ENCODE measurements at regions of chr3 and their contacts with region 1.

Region 1: GRCh38 chr3:113745273-113746068 is 578 bp downstream of the NAA50 start:
- DNase-seq: peak; percentile 89
- H3K4me3 Mint-ChIP-seq: peak overlapping the region; percentile 91
- H3K27ac Mint-ChIP-seq: peak overlapping the region; percentile 100
- H3K4me1 Mint-ChIP-seq: peaks cover 64% of the 10 kb centered on the region
- H3K27me3 Mint-ChIP-seq: no peaks in the 10 kb centered on the region

Region 2: GRCh38 chr3:113019182-113020137 is 726.0 kb before region 1 on chr3:
- CTCF ChIA-PET with region 1: no interaction called
- POLR2A ChIA-PET with region 1: interaction called, 5 read pairs
- intact Hi-C with region 1: loop called (anchors 2 kb)
- DNase-seq: peak; percentile 95
- H3K4me3 Mint-ChIP-seq: peak overlapping the region; percentile 93
- H3K27ac Mint-ChIP-seq: peak overlapping the region; percentile 97
- H3K4me1 Mint-ChIP-seq: peaks cover 55% of the 10 kb centered on the region
- H3K27me3 Mint-ChIP-seq: no peaks in the 10 kb centered on the region

Region 3: DNA sequence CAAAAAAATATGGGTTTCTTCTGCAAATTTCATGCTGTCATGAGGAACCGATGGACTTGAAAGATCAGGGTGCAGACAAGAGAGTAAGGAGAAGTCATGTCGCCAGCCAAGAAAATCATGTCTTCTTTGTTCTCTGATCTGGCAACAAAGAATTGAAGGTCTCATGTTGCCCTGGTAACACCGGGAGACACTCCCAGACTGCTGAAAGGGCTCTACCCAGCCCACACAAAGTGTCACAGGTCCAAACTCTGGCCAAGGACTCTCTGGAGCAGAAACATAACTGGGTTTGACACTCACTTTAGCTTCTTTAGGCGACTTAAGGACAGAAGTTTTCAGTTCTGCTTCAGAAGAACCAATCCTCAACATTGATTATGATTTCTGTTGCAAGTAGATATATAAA is 170.3 kb before region 1 on chr3:
- CTCF ChIA-PET with region 1: interaction called, 9 read pairs
- POLR2A ChIA-PET with region 1: interaction called, 3 read pairs
- intact Hi-C with region 1: loop called (anchors 1 kb)
- DNase-seq: no peak
- H3K4me3 Mint-ChIP-seq: no peak overlapping the region
- H3K27ac Mint-ChIP-seq: no peak overlapping the region
- H3K4me1 Mint-ChIP-seq: peaks cover 5% of the 10 kb centered on the region
- H3K27me3 Mint-ChIP-seq: no peaks in the 10 kb centered on the region

Region 4: GRCh38 chr3:113769551-113769950 is 24.1 kb after region 1 on chr3:
- CTCF ChIA-PET with region 1: interaction called, 4 read pairs
- POLR2A ChIA-PET with region 1: no interaction called
- intact Hi-C with region 1: loop called (anchors 1 kb)
- DNase-seq: no peak
- H3K4me3 Mint-ChIP-seq: no peak overlapping the region
- H3K27ac Mint-ChIP-seq: no peak overlapping the region
- H3K4me1 Mint-ChIP-seq: peaks cover 6% of the 10 kb centered on the region
- H3K27me3 Mint-ChIP-seq: no peaks in the 10 kb centered on the region

Region 5: DNA sequence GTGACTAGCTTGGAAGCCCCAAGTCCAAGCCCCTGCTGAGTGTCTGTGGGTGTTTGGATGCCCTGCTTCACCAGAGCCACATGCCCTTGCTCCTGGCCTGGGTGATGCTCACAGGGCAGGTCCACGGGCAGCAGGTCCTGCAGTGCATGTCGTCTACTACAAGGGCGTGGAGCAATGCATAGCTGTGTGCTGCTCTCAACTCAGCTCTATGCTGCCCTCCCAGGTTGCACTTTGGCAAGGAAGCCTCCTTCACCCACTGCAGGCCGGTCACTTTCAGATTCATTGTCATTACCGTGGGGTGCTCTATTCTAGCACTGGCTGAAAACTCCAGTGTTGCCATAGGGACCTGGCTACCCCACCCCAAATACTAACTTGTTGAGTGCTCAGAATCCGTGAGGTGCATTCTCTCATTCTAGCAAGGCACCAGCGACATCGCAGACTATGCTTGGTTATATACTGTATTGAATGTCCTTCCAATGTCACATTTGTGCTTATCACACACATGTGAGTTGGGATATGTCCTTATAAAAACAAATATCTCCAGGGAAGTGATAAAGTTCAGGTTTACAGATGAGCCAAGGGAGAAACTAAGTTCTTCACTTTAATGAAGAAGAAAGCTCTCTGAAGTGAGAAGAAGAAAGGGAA is 144.9 kb after region 1 on chr3:
- CTCF ChIA-PET with region 1: no interaction called
- POLR2A ChIA-PET with region 1: no interaction called
- intact Hi-C with region 1: no loop called
- DNase-seq: no peak
- H3K4me3 Mint-ChIP-seq: no peak overlapping the region
- H3K27ac Mint-ChIP-seq: no peak overlapping the region
- H3K4me1 Mint-ChIP-seq: no peaks in the 10 kb centered on the region
- H3K27me3 Mint-ChIP-seq: no peaks in the 10 kb centered on the region

Region 6: DNA sequence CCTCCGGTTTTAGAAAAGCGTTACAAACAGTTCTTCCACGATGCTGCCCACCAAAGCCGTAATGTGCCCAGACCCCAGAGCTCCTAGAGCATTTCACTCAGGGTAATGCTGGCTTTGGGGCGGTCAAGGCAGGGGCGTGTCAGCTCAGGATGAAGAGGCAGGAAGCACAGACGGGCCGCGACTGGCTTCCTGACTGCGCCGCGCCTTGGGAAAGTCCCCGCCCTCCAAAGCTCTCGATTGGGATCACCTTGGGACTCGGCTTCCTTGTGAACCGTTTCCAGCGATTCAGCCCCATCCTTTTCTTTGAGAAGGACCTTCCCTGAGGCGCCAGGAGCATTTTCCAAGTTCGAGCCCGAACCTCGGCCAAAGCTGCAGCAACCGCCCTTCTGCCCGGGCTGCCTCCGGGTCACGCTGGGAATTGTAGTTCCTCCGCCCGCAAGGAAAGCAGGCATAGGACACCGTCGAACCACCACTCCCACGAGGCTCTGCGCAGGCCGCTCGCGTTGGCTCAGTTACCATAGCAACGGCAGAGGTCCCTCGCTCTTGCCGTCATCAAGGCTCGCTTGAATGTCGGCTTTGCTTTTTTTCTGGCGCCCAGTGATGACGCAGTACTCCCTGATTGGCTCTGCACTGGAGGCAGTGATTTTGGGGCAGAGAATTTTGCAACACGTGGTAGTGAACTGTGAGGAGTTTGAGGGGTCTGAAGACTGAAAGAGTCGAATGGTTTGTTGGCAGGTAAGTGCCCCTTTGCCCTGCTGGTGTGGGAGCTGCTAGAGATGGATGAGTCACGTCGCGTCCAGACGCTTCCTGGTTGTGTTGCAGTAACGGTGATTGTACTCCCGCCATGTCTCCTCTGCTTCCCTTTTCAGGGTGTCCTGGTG is 310.9 kb after region 1 on chr3 and contains the starts of genes CCDC191 and QTRT2:
- CTCF ChIA-PET with region 1: no interaction called
- POLR2A ChIA-PET with region 1: interaction called, 3 read pairs
- intact Hi-C with region 1: loop called (anchors 1 kb)
- DNase-seq: peak; percentile 99
- H3K4me3 Mint-ChIP-seq: peak within 1 kb of the TSS; percentile 94
- H3K27ac Mint-ChIP-seq: peak within 1 kb of the TSS; percentile 89
- H3K4me1 Mint-ChIP-seq: peaks cover 28% of the 10 kb centered on the region
- H3K27me3 Mint-ChIP-seq: no peaks in the 10 kb centered on the region
- total RNA-seq, gene CCDC191: 3.5 TPM
- total RNA-seq, gene QTRT2: 27.2 to 30.7 TPM

Region 7: DNA sequence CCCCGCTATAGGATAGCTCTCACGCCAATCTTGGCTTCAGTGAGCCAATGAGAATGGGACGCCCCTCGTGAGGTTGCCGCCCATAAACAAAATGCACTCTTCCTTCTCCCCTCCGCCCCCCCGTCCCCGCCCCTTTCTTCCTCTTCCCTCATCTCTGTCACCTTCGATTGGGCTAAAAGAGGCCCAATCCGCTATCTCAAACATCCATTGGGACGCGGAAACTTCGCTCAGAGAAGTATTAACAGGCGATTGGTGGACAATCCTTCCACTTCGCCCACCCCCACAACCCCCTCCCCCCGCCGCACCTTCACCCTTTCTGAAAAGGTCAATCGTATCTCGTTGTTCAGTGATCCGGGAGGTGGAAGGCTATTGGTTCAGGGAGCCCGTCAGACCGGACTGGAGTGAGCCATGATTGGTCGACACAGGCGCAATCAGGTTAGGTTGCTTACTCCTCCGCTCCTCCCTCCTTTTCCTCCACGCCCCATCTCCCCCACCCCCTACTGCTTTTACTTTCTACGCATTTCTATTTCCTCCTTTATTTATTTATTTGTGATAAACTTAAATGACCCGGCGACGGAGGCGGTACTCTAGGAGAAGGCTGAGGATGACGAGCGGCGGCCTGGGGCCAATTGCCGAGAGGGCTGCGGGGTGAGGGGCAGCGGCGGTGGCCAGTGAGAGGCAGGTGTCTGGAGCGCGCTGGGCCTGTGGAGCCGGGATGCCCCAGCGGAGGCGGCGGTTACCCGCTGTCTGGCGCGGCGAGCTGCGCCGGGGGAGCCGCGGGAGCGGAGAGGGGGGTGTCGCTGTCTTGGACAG is 1402.1 kb after region 1 on chr3:
- CTCF ChIA-PET with region 1: no interaction called
- POLR2A ChIA-PET with region 1: no interaction called
- intact Hi-C with region 1: loop called (anchors 1 kb)
- DNase-seq: peak; percentile 98
- H3K4me3 Mint-ChIP-seq: peak overlapping the region; percentile 94
- H3K27ac Mint-ChIP-seq: peak overlapping the region; percentile 91
- H3K4me1 Mint-ChIP-seq: peaks cover 23% of the 10 kb centered on the region
- H3K27me3 Mint-ChIP-seq: peaks cover 2% of the 10 kb centered on the region

Measured in activated CD4-positive, alpha-beta memory T cell treated with anti-CD3 and anti-CD28 coated beads for 36 hours (primary cell).